CD4-positive, alpha-beta memory T cell (primary cell): ENCODE measurements at regions of chr11 and their contacts with region 1.

Region 1: DNA sequence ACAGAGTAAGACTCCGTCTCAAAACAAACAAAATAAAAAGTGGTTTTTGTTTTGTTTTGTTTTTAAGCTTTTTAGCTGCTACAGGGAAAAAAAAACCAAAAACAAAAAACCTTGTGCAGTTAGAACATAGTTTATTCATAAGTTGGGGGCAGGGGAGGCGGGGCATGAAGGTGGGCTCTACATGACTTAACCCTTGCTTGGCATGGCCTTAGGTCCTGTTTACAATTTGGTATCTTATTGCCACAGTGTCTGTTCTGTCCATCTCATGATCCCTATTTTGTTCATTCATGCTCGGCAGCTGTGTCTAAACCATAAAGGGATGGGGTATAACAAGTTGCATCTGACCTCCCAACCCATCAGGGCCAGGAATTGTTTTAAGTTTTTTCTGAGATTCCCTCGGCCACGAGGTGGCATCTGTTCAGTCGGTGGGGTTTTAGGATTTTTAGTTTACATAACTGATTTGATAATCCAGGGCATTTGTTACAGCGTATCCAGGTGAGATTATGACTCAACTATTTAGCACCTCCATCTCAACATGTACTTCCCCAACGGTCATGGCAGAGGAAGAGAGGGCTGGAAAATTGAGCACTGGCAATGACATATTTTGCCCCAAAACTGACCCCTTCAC is 6.9 kb downstream of the AP5B1 start:
- DNase-seq: no peak
- H3K4me3 ChIP-seq: no peak overlapping the region
- H3K4me3 Mint-ChIP-seq: no peak overlapping the region
- H3K27ac ChIP-seq: no peak overlapping the region
- H3K27ac Mint-ChIP-seq: no peak overlapping the region
- H3K4me1 ChIP-seq: peaks cover 3% of the 10 kb centered on the region
- H3K4me1 Mint-ChIP-seq: peaks cover 0 to 8% (median 3%) of the 10 kb centered on the region in 4 donors
- H3K27me3 ChIP-seq: no peaks in the 10 kb centered on the region
- H3K27me3 Mint-ChIP-seq: no peaks in the 10 kb centered on the region

Region 2: GRCh38 chr11:65703846-65704245 is 70.1 kb before region 1 on chr11:
- CTCF ChIA-PET with region 1: interaction called, 10 read pairs
- POLR2A ChIA-PET with region 1: no interaction called
- intact Hi-C with region 1: no loop called
- DNase-seq: no peak
- H3K4me3 ChIP-seq: no peak overlapping the region
- H3K4me3 Mint-ChIP-seq: no peak overlapping the region
- H3K27ac ChIP-seq: no peak overlapping the region
- H3K27ac Mint-ChIP-seq: no peak overlapping the region
- H3K4me1 ChIP-seq: no peaks in the 10 kb centered on the region
- H3K4me1 Mint-ChIP-seq: peaks cover 0 to 10% (median 0%) of the 10 kb centered on the region in 4 donors
- H3K27me3 ChIP-seq: no peaks in the 10 kb centered on the region
- H3K27me3 Mint-ChIP-seq: peaks cover 1 to 7% of the 10 kb centered on the region in 2 donors

Region 3: GRCh38 chr11:65791691-65792213 is 17.9 kb after region 1 on chr11:
- CTCF ChIA-PET with region 1: interaction called, 20 read pairs
- POLR2A ChIA-PET with region 1: interaction called, 4 read pairs
- intact Hi-C with region 1: no loop called
- DNase-seq: peak in 4 of 5 donors; percentile 34 to 64 (median 42)
- H3K4me3 ChIP-seq: no peak overlapping the region
- H3K4me3 Mint-ChIP-seq: peak overlapping the region in 1 of 8 donors; percentile 16
- H3K27ac ChIP-seq: no peak overlapping the region
- H3K27ac Mint-ChIP-seq: peak overlapping the region in 1 of 7 donors; percentile 48
- H3K4me1 ChIP-seq: peaks cover 25% of the 10 kb centered on the region
- H3K4me1 Mint-ChIP-seq: peaks cover 4 to 35% (median 17%) of the 10 kb centered on the region in 4 donors
- H3K27me3 ChIP-seq: peaks cover 20% of the 10 kb centered on the region
- H3K27me3 Mint-ChIP-seq: peaks cover 16 to 18% of the 10 kb centered on the region in 2 donors

Region 4: GRCh38 chr11:65833297-65834030 is 59.6 kb after region 1 on chr11 and contains the start of gene SNX32:
- CTCF ChIA-PET with region 1: interaction called, 13 read pairs
- POLR2A ChIA-PET with region 1: no interaction called
- intact Hi-C with region 1: no loop called
- DNase-seq: peak; percentile 91 to 94 (median 93)
- H3K4me3 ChIP-seq: peak within 1 kb of the TSS; percentile 31 to 67
- H3K4me3 Mint-ChIP-seq: no peak within 1 kb of the TSS
- H3K27ac ChIP-seq: peak within 1 kb of the TSS; percentile 17
- H3K27ac Mint-ChIP-seq: peak within 1 kb of the TSS in 5 of 7 donors; percentile 29 to 82 (median 70)
- H3K4me1 ChIP-seq: peaks cover 20% of the 10 kb centered on the region
- H3K4me1 Mint-ChIP-seq: peaks cover 8% of the 10 kb centered on the region in 4 donors
- H3K27me3 ChIP-seq: no peaks in the 10 kb centered on the region
- H3K27me3 Mint-ChIP-seq: no peaks in the 10 kb centered on the region
- total RNA-seq, gene SNX32: 0.42 to 0.64 TPM